Psoas muscle (tissue), 8 donors: ENCODE measurements at regions of chr9 and their contacts with region 1.

Region 1: GRCh38 chr9:16515879-16516301 is 354.6 kb downstream of the BNC2 start:
- DNase-seq: no peak
- ATAC-seq: peak in 2 of 4 donors; percentile 40 to 52
- H3K4me3 ChIP-seq: no peak overlapping the region
- H3K27ac ChIP-seq: no peak overlapping the region
- H3K4me1 ChIP-seq: peaks cover 3% of the 10 kb centered on the region
- H3K27me3 ChIP-seq: no peaks in the 10 kb centered on the region
- CTCF ChIP-seq: no peak

Region 2: GRCh38 chr9:16434526-16434925 is 81.4 kb before region 1 on chr9:
- intact Hi-C with region 1: loop called in 1 of 2 experiments (anchors 10 kb)
- DNase-seq: no peak
- ATAC-seq: no peak
- H3K4me3 ChIP-seq: no peak overlapping the region
- H3K27ac ChIP-seq: no peak overlapping the region
- H3K4me1 ChIP-seq: no peaks in the 10 kb centered on the region
- H3K27me3 ChIP-seq: no peaks in the 10 kb centered on the region
- CTCF ChIP-seq: no peak

Region 3: DNA sequence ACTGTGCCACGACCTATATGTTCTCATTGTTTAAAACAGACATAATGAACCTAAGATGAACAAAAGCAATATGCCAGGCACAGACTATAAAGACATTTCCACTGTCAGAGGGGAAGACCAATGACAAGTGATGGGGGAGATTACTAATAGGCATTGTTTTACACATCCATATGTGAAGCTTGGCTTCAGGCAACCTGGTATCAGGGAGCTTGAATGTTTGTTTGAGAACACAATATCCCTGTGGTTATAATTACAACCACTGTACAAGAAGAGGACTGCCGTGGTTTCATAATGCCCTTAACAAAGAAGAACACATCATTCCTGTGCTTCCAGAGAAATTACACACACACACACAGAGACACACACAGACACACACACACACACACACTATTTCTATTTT is 31.1 kb before region 1 on chr9:
- intact Hi-C with region 1: no loop called
- DNase-seq: no peak
- ATAC-seq: peak in 2 of 4 donors; percentile 26 to 46
- H3K4me3 ChIP-seq: no peak overlapping the region
- H3K27ac ChIP-seq: no peak overlapping the region
- H3K4me1 ChIP-seq: no peaks in the 10 kb centered on the region
- H3K27me3 ChIP-seq: no peaks in the 10 kb centered on the region
- CTCF ChIP-seq: no peak